ENCODE measurements at regions of chr10 and their contacts with region 1.

Region 1: GRCh38 chr10:124671486-124672075 is 72.6 kb downstream of the FAM53B start:
- DNase-seq: peak; percentile 59
- H3K4me3 Mint-ChIP-seq: no peak overlapping the region
- H3K27ac Mint-ChIP-seq: peak overlapping the region; percentile 64
- H3K4me1 Mint-ChIP-seq: peaks cover 73% of the 10 kb centered on the region
- H3K27me3 Mint-ChIP-seq: no peaks in the 10 kb centered on the region

Region 2: DNA sequence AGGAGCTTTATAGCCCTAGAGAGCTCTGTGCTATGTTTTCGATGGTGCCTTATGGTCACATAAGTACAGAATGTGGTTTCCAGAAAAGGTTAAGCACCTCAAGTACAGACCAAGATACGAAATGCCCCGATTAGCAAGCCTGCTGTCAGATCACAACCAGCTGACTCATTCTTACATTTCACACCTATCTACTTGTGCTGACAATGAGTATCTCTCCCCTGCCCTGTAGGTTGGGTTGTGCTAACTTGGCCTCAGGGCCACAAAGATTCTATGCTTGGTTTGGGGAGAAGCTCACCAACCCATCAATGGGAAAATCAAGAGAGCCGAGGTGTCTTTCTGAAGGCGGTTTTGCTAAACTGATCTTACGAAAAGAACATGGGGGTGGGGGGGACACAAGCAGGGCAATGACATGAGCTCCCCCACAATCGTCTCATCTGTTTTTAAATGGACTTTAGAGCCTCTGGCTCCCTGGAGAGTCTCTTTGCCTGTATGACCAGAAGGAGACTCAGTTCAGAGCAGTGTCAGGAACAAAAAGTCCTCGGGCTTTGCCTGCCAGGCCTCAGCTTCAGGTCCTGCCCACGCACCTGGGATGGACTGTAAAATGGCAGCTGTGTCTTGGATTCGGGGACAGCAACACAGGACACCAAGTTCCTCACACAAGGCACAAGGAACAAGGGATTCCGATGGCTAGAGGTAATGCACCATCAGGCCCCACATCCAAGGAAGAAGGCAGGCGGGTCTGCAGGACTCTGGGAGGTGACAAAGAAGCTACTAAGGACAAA is 17.5 kb after region 1 on chr10:
- CTCF ChIA-PET with region 1: interaction called, 5 read pairs
- intact Hi-C with region 1: loop called (anchors 1 kb)
- DNase-seq: peak; percentile 83
- H3K4me3 Mint-ChIP-seq: no peak overlapping the region
- H3K27ac Mint-ChIP-seq: peak overlapping the region; percentile 46
- H3K4me1 Mint-ChIP-seq: peaks cover 74% of the 10 kb centered on the region
- H3K27me3 Mint-ChIP-seq: no peaks in the 10 kb centered on the region

Region 3: DNA sequence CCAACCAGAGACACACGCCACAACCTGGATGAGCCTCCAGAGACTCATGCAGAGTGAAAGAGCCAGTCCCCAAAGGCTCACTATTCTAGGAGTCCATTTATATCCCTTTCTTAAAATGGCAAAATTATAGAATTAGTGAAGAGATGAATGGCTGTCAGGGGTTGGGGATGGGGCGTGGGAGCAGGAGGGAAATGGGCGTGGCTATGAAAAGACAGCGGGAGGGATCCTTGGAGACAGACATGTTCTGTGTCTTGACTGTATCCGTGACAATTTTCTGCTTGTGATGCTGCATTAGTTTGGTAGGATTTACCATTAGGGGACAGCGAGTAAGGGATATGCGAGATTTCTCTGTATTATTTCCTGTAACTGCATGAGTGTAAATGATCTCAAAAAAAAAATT is 39.6 kb after region 1 on chr10:
- CTCF ChIA-PET with region 1: no interaction called
- intact Hi-C with region 1: no loop called
- DNase-seq: no peak
- H3K4me3 Mint-ChIP-seq: no peak overlapping the region
- H3K27ac Mint-ChIP-seq: no peak overlapping the region
- H3K4me1 Mint-ChIP-seq: peaks cover 65% of the 10 kb centered on the region
- H3K27me3 Mint-ChIP-seq: no peaks in the 10 kb centered on the region